ENCODE measurements at regions of chr22 and their contacts with region 1.

Region 1: GRCh38 chr22:24270638-24271408 is at the start of gene SPECC1L:
- DNase-seq: peak; percentile 47 to 97
- H3K4me3 ChIP-seq: peak within 1 kb of the TSS; percentile 82 to 89
- H3K27ac ChIP-seq: peak within 1 kb of the TSS; percentile 93 to 94
- H3K4me1 ChIP-seq: peaks cover 0 to 13% of the 10 kb centered on the region in 2 donors
- H3K27me3 ChIP-seq: no peaks in the 10 kb centered on the region
- CTCF ChIP-seq: no peak
- total RNA-seq, gene SPECC1L: 66.9 TPM

Region 2: DNA sequence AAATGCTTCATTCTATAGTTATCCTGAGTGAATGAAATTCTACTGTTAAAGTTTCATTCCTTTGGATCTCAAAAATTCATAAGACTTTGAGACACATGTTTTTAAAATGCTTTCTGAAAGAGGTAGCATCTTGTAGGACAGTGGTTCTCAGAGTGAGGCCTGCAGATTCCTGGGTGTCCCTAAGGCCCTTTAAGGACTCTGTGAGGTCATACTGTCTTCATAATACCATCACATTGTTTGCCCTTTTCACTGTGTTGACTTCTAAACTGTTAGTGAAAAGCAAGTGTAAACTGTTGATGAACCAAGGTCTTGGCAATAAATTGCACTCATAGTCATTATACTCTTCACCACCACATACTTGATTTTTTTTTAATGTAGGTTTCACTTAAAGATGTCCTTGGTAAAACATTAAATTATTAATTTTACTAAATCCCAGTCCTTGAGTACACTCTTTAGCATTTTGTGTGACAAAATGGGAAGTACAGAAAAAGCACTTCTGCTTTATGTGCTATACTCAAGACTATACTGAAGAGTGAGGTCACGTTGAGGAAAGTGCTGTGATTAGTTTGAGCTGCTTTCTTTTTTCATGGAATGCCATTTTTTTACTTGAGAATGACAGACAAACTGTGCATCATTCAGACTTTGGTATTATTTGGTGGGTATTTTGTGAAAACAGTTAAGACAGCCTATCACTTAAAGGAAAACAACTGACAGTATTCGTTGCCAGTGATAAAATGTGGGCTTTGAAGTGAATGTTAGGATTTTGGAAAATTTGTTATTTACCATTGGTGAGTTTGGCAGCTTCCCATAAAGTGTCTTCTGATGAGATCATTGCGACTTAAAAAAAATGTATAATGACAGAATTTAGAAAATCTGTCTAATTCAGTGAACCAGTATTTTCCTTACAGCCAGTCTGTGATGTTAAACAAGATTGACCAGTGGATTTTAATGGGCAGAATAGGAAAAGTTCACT is 60.9 kb after region 1 on chr22:
- intact Hi-C with region 1: loop called (anchors 2 kb)
- DNase-seq: no peak
- H3K4me3 ChIP-seq: no peak overlapping the region
- H3K27ac ChIP-seq: no peak overlapping the region
- H3K4me1 ChIP-seq: no peaks in the 10 kb centered on the region
- H3K27me3 ChIP-seq: no peaks in the 10 kb centered on the region
- CTCF ChIP-seq: no peak